Activated T-helper 2 cell treated with anti-CD3 and anti-CD28 coated beads, Interferon-gamma antibody, Interleukin-2, Interleukin-4, amounts not matched to agents 10 μg/mL and 5 μg/mL and 100 μg/mL, durations not matched to agents 14 hours and 24 hours and 36 hours (primary cell): ENCODE measurements at regions of chr3 and their contacts with region 1.

Region 1: GRCh38 chr3:5057857-5058324 is 64.2 kb upstream of the ARL8B start:
- DNase-seq: peak; percentile 65
- H3K4me3 Mint-ChIP-seq: no peak overlapping the region
- H3K27ac Mint-ChIP-seq: peak overlapping the region; percentile 3
- H3K4me1 Mint-ChIP-seq: peaks cover 30% of the 10 kb centered on the region
- H3K27me3 Mint-ChIP-seq: peaks cover 8% of the 10 kb centered on the region

Region 2: DNA sequence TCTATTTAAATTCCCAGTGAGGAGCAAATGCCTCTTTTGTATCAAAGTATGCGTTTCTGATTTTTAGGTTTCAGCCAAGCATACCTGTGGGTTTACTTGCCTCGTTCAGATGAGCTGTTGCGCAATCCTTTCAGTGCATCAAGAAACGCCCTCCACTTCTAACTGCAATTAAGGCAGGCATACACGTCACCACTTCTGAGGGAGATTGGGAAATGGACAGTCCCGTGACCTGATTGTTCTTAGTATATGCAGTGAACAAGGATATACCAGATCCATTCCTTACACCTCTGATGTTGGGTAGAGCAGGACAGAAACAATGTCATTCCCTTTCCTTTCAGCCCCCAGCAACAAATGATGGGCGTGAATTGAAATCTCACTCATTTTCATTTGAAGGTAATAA is 345.7 kb before region 1 on chr3:
- intact Hi-C with region 1: loop called (anchors 1 kb)
- DNase-seq: no peak
- H3K4me3 Mint-ChIP-seq: no peak overlapping the region
- H3K27ac Mint-ChIP-seq: no peak overlapping the region
- H3K4me1 Mint-ChIP-seq: peaks cover 28% of the 10 kb centered on the region
- H3K27me3 Mint-ChIP-seq: no peaks in the 10 kb centered on the region

Region 3: GRCh38 chr3:4845882-4846281 is 212.0 kb before region 1 on chr3:
- intact Hi-C with region 1: loop called (anchors 5 kb)
- DNase-seq: no peak
- H3K4me3 Mint-ChIP-seq: no peak overlapping the region
- H3K27ac Mint-ChIP-seq: peak overlapping the region; percentile 82
- H3K4me1 Mint-ChIP-seq: peaks cover 90% of the 10 kb centered on the region
- H3K27me3 Mint-ChIP-seq: no peaks in the 10 kb centered on the region

Region 4: GRCh38 chr3:4986782-4987537 is 70.9 kb before region 1 on chr3:
- intact Hi-C with region 1: loop called (anchors 1 kb)
- DNase-seq: peak; percentile 75
- H3K4me3 Mint-ChIP-seq: peak overlapping the region; percentile 82
- H3K27ac Mint-ChIP-seq: peak overlapping the region; percentile 85
- H3K4me1 Mint-ChIP-seq: peaks cover 53% of the 10 kb centered on the region
- H3K27me3 Mint-ChIP-seq: no peaks in the 10 kb centered on the region

Region 5: DNA sequence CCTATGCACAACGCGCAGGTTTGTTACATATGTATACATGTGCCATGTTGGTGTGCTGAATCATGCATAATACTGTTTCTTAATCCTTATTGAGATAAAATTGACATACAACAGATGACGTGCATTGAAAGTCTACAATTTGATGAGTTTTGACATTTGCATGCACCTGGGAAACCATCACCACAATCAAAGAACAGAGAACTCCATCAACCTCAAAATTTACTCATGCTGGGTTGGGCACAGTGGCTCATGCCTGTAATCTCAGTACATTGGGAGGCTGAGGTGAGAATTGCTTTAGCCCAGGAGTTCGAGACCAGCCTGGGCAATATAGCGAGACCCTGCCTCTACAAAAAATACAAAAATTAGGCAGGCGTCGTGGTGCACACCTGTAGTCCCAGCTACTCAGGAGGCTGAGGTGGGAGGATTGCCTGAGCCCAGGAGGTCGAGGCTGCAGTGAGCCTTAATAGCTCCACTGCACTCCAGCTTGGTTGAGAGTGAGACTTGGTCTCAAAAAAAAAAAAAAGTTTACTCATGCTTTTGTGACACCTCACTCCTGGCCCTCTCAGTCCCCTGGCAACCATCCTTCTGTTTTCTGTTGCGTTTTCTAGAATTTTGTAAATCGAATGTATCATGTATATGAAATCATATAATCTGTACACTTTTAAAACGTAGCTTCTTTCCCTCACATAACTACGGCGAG is 22.0 kb before region 1 on chr3:
- intact Hi-C with region 1: loop called (anchors 2 kb)
- DNase-seq: no peak
- H3K4me3 Mint-ChIP-seq: no peak overlapping the region
- H3K27ac Mint-ChIP-seq: no peak overlapping the region
- H3K4me1 Mint-ChIP-seq: peaks cover 40% of the 10 kb centered on the region
- H3K27me3 Mint-ChIP-seq: no peaks in the 10 kb centered on the region